ENCODE measurements at regions of chr2 and their contacts with region 1.

Region 1: GRCh38 chr2:19863303-19864041 is 38.3 kb downstream of the TTC32 start:
- DNase-seq: peak; percentile 55
- H3K4me3 ChIP-seq: no peak overlapping the region
- H3K27ac ChIP-seq: no peak overlapping the region
- H3K4me1 ChIP-seq: peaks cover under 1% of the 10 kb centered on the region
- H3K27me3 ChIP-seq: no peaks in the 10 kb centered on the region
- CTCF ChIP-seq: peak; percentile 88 to 94
- POLR2A ChIP-seq: no peak

Region 2: DNA sequence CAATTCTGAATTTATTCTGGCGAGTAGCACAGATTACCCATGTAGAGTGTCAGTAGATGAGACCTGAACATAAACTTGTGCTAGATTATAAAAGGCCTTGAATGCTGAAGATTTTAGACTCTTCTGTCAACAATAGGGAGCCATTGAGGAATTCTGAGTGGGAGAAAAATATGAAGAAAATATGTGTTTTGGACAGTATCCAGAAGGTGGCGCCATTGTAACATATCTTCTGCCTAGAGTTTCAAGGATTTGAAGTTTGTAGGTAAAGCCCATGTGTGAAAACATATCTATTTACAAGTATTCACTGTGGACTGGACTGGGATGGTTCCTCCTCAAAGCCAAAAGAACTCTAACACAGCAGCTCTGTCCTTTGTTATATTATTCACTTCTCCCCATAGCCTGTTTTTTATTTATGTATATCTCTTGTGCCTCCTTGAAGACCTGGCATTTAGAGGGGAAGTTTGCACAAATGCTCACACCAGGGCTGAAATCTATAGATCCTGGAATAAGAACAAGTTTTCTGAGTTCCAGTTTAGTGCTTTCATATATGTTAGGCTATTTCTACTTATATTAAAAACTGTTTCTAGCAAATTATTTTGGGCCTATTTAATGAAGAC is 1427.9 kb before region 1 on chr2:
- CTCF ChIA-PET with region 1: interaction called, 4 read pairs
- POLR2A ChIA-PET with region 1: no interaction called
- dilution Hi-C with region 1: no loop called
- intact Hi-C with region 1: loop called (anchors 1 kb)
- DNase-seq: peak; percentile 75
- H3K4me3 ChIP-seq: no peak overlapping the region
- H3K27ac ChIP-seq: no peak overlapping the region
- H3K4me1 ChIP-seq: peaks cover 5% of the 10 kb centered on the region
- H3K27me3 ChIP-seq: no peaks in the 10 kb centered on the region
- CTCF ChIP-seq: peak; percentile 39 to 51
- POLR2A ChIP-seq: no peak

Region 3: GRCh38 chr2:18749912-18750526 is 1113.5 kb before region 1 on chr2:
- CTCF ChIA-PET with region 1: interaction called, 11 read pairs
- POLR2A ChIA-PET with region 1: no interaction called
- dilution Hi-C with region 1: no loop called
- intact Hi-C with region 1: loop called (anchors 1 kb)
- DNase-seq: peak; percentile 42
- H3K4me3 ChIP-seq: no peak overlapping the region
- H3K27ac ChIP-seq: no peak overlapping the region
- H3K4me1 ChIP-seq: no peaks in the 10 kb centered on the region
- H3K27me3 ChIP-seq: no peaks in the 10 kb centered on the region
- CTCF ChIP-seq: peak; percentile 44 to 52
- POLR2A ChIP-seq: no peak

Region 4: DNA sequence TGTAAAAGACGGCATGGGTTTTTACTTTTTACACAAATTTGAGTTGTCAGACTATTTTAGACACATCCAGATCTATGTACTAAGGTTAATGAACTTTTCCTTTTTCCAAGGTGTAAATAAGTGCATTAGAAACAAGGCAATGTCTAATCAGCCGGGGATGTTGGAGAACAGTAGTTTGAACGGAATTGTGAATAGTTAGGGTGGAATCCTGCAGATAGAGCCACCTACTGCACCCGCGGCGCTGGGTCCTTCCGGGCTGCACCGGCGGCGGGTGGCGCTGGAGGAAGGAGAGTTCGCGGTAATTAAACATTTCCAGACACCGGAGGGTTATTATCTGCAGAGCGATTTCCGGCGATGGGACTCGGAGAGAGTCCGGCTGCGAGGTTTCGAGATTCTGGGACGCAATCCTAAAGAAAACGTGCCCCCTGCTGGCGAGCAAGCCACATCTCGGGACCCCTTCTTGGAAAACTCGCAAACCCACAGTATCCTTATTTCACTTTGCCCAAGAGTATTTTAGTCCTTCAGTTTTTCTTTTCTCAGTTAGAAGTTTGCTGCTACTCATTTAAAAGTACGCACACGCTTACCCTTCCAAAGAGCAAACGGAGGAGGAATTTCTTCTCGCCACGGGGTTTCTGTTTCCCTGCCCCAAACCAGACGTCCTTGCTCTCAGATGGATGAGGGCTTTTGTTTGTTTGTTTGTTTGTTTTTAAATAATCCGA is 500.6 kb before region 1 on chr2:
- CTCF ChIA-PET with region 1: interaction called, 5 read pairs
- POLR2A ChIA-PET with region 1: no interaction called
- dilution Hi-C with region 1: no loop called
- intact Hi-C with region 1: loop called (anchors 1 kb)
- DNase-seq: peak; percentile 67
- H3K4me3 ChIP-seq: peak overlapping the region; percentile 22 to 88 (median 48)
- H3K27ac ChIP-seq: no peak overlapping the region
- H3K4me1 ChIP-seq: peaks cover 18% of the 10 kb centered on the region
- H3K27me3 ChIP-seq: peaks cover 72 to 75% of the 10 kb centered on the region in 2 experiments
- CTCF ChIP-seq: peak; percentile 84 to 88
- POLR2A ChIP-seq: no peak

Region 5: GRCh38 chr2:19769513-19769912 is 94.0 kb before region 1 on chr2:
- CTCF ChIA-PET with region 1: interaction called, 6 read pairs
- POLR2A ChIA-PET with region 1: no interaction called
- dilution Hi-C with region 1: no loop called
- intact Hi-C with region 1: loop called (anchors 1 kb)
- DNase-seq: peak; percentile 14
- H3K4me3 ChIP-seq: no peak overlapping the region
- H3K27ac ChIP-seq: no peak overlapping the region
- H3K4me1 ChIP-seq: no peaks in the 10 kb centered on the region
- H3K27me3 ChIP-seq: peaks cover 0 to 6% of the 10 kb centered on the region in 2 experiments
- CTCF ChIP-seq: peak in 1 of 2 donors; percentile 1
- POLR2A ChIP-seq: no peak

Region 6: GRCh38 chr2:20097879-20098714 is 234.6 kb after region 1 on chr2:
- CTCF ChIA-PET with region 1: no interaction called
- POLR2A ChIA-PET with region 1: no interaction called
- dilution Hi-C with region 1: no loop called
- intact Hi-C with region 1: loop called (anchors 2 kb)
- DNase-seq: peak; percentile 94
- H3K4me3 ChIP-seq: no peak overlapping the region
- H3K27ac ChIP-seq: no peak overlapping the region
- H3K4me1 ChIP-seq: peaks cover 4% of the 10 kb centered on the region
- H3K27me3 ChIP-seq: no peaks in the 10 kb centered on the region
- CTCF ChIP-seq: peak; percentile 86 to 93
- POLR2A ChIP-seq: no peak

Measured in endothelial cell of umbilical vein (primary cell).